A549 (cell line): ENCODE measurements at regions of chr19 and their contacts with region 1.

Region 1: GRCh38 chr19:17305517-17306284 is at the start of gene MRPL34:
- DNase-seq: peak; percentile 71 to 99
- ATAC-seq: peak; percentile 62 to 80
- H3K4me3 ChIP-seq: peak within 1 kb of the TSS; percentile 50
- H3K27ac ChIP-seq: peak within 1 kb of the TSS; percentile 80 to 99
- H3K4me1 ChIP-seq: peaks cover 32% of the 10 kb centered on the region
- CTCF ChIP-seq: peak; percentile 68
- EP300 ChIP-seq: no peak
- POLR2A ChIP-seq: peak; percentile 50
- RAD21 ChIP-seq: peak; percentile 55 to 64
- polyA plus RNA-seq, gene MRPL34: 28.1 and 30.5 TPM in 2 replicates

Region 2: DNA sequence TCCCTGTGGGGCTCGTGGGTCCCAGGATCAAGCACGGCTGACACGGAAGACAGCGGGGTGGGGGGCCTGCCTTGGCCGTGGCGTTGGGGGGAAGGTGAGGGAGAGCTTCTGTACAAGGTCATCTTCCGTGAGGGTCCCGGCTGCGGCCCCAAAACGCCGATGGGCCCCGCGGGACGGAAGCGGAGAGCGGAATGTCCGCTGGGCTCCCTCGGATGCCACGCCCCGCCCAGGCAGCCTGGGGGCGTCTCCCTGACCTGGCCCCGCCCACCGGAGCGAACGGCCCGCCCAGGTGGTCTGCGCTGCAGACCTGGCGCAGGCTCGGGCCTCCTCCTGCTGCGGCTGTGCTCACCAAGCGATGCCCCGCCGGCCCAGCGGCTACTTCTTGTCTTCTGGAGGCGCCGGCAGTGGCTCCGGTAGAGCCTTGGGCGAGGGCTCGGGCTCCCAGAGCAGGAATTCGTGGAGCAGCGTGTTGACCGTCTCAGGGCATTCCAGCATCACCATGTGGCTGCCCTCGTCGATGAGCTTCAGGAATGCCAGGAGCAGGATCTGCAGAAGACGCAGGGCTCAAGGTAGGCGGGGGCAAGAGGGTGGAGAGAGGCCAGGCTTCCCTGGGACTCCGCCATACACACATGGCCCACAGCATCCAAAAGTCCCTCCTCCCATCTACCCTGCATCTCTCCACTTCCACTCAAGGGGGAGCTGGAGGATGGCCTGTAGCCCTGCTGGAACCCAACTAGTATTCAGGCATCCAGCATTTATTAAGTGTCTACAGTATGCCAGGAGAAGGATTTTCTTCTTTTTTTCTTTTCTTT is 13.2 kb before region 1 on chr19:
- CTCF ChIA-PET with region 1: interaction called, 98 read pairs
- POLR2A ChIA-PET with region 1: interaction called, 15 read pairs
- DNase-seq: peak; percentile 92 to 94
- ATAC-seq: peak; percentile 93 to 94
- H3K4me3 ChIP-seq: peak overlapping the region; percentile 67
- H3K27ac ChIP-seq: peak overlapping the region; percentile 87 to 89
- H3K4me1 ChIP-seq: peaks cover 23% of the 10 kb centered on the region; the same call in 2 of the 3 replicates
- CTCF ChIP-seq: peak; percentile 55
- EP300 ChIP-seq: no peak
- POLR2A ChIP-seq: peak; percentile 59
- RAD21 ChIP-seq: peak; percentile 64 to 82